Activated CD4-positive, alpha-beta memory T cell treated with anti-CD3 and anti-CD28 coated beads for 36 hours (primary cell): ENCODE measurements at regions of chr4 and their contacts with region 1.

Region 1: DNA sequence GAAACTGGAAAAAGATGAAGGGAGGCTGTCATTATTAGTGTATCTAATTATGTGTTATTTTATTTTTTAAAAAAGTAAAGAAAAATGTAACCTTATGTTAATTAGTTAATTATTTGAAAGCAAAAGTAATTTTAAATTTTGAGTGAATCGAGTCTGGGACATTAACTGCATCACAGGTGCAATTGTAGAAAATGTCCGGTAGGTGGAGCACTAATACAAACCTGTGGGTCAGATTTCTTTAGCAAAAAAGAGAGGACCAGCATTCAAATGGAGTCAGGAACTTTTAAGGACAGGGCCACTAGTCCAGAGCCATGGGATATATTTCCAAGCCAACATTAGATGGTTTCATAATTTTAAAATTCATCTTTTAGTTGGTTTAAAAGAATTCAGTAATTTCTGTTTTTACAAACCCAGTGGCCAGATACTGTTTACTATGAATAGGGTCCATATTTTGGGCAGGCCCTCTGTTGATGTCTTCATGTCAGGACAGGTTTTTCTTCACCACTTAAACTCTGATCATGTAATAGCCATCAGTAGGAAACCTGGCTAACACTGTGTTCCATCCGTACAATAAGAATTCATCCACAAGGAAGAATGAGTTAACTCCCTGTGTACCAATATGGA is 27.2 kb downstream of the BST1 start:
- DNase-seq: peak; percentile 15
- H3K4me3 Mint-ChIP-seq: no peak overlapping the region
- H3K27ac Mint-ChIP-seq: no peak overlapping the region
- H3K4me1 Mint-ChIP-seq: no peaks in the 10 kb centered on the region
- H3K27me3 Mint-ChIP-seq: peaks cover 2% of the 10 kb centered on the region

Region 2: GRCh38 chr4:15479089-15479912 is 250.7 kb before region 1 on chr4:
- CTCF ChIA-PET with region 1: no interaction called
- POLR2A ChIA-PET with region 1: no interaction called
- intact Hi-C with region 1: loop called (anchors 2 kb)
- DNase-seq: no peak
- H3K4me3 Mint-ChIP-seq: no peak overlapping the region
- H3K27ac Mint-ChIP-seq: no peak overlapping the region
- H3K4me1 Mint-ChIP-seq: no peaks in the 10 kb centered on the region
- H3K27me3 Mint-ChIP-seq: no peaks in the 10 kb centered on the region

Region 3: DNA sequence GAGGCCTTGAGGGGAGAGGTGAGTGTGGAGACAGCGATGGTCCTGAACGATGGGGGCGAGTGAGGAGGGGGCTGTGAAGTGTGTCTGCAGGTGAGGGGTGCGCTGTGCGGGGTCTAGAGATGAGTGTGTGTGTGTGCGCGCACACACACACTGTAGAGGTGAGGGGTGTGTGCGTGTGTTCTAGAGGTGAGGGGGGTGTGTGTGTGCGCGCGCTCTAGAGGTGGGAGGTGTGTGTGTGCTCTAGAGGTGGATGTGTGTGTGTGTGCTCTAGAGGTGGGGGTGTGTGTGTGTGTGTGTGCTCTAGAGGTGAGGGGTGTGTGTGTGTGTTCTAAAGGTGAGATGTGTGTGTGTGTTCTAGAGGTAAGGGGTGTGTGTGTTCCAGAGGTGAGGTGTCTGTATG is 26.6 kb before region 1 on chr4:
- CTCF ChIA-PET with region 1: no interaction called
- POLR2A ChIA-PET with region 1: no interaction called
- intact Hi-C with region 1: no loop called
- DNase-seq: no peak
- H3K4me3 Mint-ChIP-seq: peak overlapping the region; percentile 51
- H3K27ac Mint-ChIP-seq: no peak overlapping the region
- H3K4me1 Mint-ChIP-seq: peaks cover 7% of the 10 kb centered on the region
- H3K27me3 Mint-ChIP-seq: peaks cover 3% of the 10 kb centered on the region

Region 4: GRCh38 chr4:15805583-15806517 is 75.8 kb after region 1 on chr4:
- CTCF ChIA-PET with region 1: interaction called, 19 read pairs
- POLR2A ChIA-PET with region 1: no interaction called
- intact Hi-C with region 1: loop called (anchors 1 kb)
- DNase-seq: peak; percentile 43
- H3K4me3 Mint-ChIP-seq: no peak overlapping the region
- H3K27ac Mint-ChIP-seq: no peak overlapping the region
- H3K4me1 Mint-ChIP-seq: peaks cover 12% of the 10 kb centered on the region
- H3K27me3 Mint-ChIP-seq: no peaks in the 10 kb centered on the region

Region 5: GRCh38 chr4:15906024-15906443 is 176.0 kb after region 1 on chr4:
- CTCF ChIA-PET with region 1: no interaction called
- POLR2A ChIA-PET with region 1: no interaction called
- intact Hi-C with region 1: no loop called
- DNase-seq: peak; percentile 58
- H3K4me3 Mint-ChIP-seq: no peak overlapping the region
- H3K27ac Mint-ChIP-seq: no peak overlapping the region
- H3K4me1 Mint-ChIP-seq: no peaks in the 10 kb centered on the region
- H3K27me3 Mint-ChIP-seq: peaks cover 24% of the 10 kb centered on the region